Activated naive CD4-positive, alpha-beta T cell treated with anti-CD3 and anti-CD28 coated beads, Interleukin-2, amount 10 ng/mL, durations not matched to agents 7 days and 5 days (primary cell): ENCODE measurements at regions of chr1 and their contacts with region 1.

Region 1: GRCh38 chr1:192609110-192610079 is 26.6 kb upstream of the RGS13 start:
- DNase-seq: peak; percentile 74
- H3K4me3 Mint-ChIP-seq: no peak overlapping the region
- H3K27ac Mint-ChIP-seq: peak overlapping the region; percentile 40
- H3K4me1 Mint-ChIP-seq: peaks cover 14% of the 10 kb centered on the region
- H3K27me3 Mint-ChIP-seq: peaks cover 6% of the 10 kb centered on the region

Region 2: DNA sequence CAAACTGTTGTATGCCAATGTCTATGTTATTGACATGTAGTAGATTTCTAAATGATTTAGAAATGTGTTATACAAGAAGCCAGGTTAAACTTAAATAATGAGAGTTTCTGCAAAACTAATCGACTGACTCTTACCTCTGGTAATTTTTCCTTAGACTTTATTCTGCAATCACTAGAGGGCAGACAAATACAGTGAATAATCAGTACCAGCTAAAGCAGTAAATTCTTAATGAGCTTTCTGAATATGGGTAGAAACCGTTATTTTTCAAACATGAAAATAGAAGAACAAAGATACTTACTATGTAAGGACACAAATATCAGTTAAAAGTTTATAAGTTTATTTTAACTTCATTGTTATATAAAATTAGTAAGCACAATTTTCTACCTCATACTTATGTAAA is 131.8 kb before region 1 on chr1:
- CTCF ChIA-PET with region 1: interaction called, 81 read pairs
- DNase-seq: no peak
- H3K4me3 Mint-ChIP-seq: no peak overlapping the region
- H3K27ac Mint-ChIP-seq: no peak overlapping the region
- H3K4me1 Mint-ChIP-seq: no peaks in the 10 kb centered on the region
- H3K27me3 Mint-ChIP-seq: peaks cover 23% of the 10 kb centered on the region